ENCODE measurements at regions of chr5 and their contacts with region 1.

Region 1: GRCh38 chr5:61666064-61666621 is 334.1 kb downstream of the ZSWIM6 start:
- DNase-seq: no peak

Region 2: DNA sequence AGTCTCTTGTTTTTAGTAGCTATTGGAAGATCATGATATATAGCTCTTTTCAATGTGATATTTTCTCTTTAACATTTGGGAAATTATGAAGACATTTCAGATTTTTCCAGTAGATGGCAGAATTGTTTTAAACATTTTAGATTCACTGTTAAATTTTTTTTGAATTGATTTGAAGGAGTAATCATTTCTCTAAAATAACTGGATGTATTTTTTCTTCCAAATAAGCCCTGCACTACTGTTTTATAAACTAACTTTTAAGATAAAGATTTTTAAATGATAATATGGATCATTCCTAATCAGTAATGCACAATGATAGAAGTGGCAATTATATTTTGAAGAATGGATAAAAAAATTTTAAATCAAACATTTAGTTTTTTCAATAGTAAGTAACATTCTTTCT is 707.0 kb before region 1 on chr5:
- intact Hi-C with region 1: loop called (anchors 10 kb)
- DNase-seq: no peak

Region 3: GRCh38 chr5:61301341-61302199 is 364.6 kb before region 1 on chr5:
- intact Hi-C with region 1: no loop called
- DNase-seq: no peak

Region 4: DNA sequence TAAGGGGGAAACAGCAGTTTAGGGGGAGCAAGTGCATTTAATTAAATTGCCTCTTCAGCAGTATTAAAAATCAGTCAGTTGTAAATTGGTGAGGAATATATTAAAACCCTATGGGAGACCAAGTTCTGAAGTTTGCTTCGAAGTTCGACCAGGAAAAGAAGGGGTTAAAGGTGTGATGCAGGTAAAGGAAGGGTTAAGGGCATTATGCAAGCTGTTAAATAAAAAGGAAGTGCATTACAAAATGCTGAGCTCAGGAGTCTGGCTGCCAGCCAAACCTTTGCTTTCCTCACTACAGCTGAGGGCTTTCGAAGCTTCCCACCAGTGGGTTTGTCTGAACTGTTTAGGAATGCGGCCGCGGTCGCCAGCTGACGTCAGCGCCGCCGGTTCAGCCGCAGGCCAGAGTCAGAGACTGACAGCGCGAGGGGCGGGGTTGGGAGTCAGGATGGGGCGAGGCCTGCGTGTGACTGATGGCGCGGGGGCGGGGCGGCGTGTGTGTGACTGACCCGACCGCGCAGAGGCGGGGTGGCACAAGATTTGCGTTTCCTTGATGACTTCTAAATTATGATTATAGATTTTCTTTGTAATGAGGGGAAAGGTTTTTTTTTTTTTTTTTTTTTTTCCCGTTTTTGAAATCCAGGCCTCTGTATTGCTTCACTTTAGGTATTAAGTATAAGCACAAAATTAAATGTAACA is 257.5 kb before region 1 on chr5:
- intact Hi-C with region 1: loop called (anchors 10 kb)
- DNase-seq: peak; percentile 100